Calu3 (cell line): ENCODE measurements at regions of chr17 and their contacts with region 1.

Region 1: DNA sequence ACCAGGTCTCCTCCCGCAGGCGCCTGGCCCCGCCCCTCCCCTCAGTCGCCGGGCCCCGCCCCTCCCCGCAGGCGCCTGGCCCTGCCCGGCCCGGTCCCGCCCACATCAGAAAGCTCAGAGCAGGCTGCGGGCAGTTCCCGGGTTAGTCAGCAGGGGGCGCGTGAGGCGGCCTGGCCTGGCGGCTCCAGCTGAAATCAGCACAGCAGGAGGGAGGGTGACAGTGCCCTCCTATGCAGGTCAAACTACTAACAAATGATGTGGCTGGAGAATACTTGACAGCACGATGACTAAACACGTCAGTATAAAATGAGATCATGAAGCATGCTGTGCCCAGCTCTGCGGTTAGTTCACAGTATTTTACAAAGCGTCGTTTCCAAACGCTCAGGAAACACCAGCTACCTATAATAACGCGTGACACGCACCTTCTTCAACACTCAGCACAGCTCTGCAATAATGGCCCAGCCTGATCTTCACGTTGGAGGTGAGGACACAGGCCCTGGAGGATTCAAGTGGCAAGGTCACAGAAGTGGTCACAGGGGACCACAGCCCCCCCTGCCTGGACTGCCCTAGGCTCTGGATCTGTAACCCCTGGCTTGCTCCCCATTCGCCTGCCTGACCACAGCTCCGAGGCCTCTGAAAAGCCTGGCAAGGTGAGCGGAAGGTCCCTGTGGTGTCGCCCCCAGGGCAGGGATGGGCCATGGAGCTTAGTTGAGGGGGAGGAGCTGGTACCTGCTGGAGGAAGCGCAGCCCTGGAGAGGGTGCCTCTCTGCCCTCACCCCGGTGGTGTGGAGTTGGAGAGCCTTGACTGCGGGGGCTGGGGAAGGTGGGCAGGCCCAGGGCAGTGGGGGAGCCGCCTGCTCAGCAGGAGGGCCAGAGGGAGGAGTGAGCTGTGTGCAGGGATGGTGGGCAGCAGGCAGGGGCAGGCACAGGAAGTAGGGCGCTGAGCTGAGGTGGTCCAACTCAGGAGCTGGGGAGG is 81.2 kb downstream of the KCNJ12 start:
- DNase-seq: peak; percentile 94
- H3K4me3 Mint-ChIP-seq: no peak overlapping the region
- H3K27ac Mint-ChIP-seq: peak overlapping the region; percentile 47
- H3K4me1 Mint-ChIP-seq: no peaks in the 10 kb centered on the region
- H3K27me3 Mint-ChIP-seq: peaks cover 50% of the 10 kb centered on the region
- CTCF ChIP-seq: peak; percentile 84

Region 2: GRCh38 chr17:21400816-21401593 is 56.3 kb before region 1 on chr17:
- CTCF ChIA-PET with region 1: no interaction called
- intact Hi-C with region 1: no loop called
- DNase-seq: no peak
- H3K4me3 Mint-ChIP-seq: no peak overlapping the region
- H3K27ac Mint-ChIP-seq: no peak overlapping the region
- H3K4me1 Mint-ChIP-seq: no peaks in the 10 kb centered on the region
- H3K27me3 Mint-ChIP-seq: peaks cover 13% of the 10 kb centered on the region
- CTCF ChIP-seq: no peak

Region 3: GRCh38 chr17:21500064-21500463 is 42.7 kb after region 1 on chr17:
- CTCF ChIA-PET with region 1: no interaction called
- intact Hi-C with region 1: no loop called
- DNase-seq: no peak
- H3K4me3 Mint-ChIP-seq: no peak overlapping the region
- H3K27ac Mint-ChIP-seq: no peak overlapping the region
- H3K4me1 Mint-ChIP-seq: no peaks in the 10 kb centered on the region
- H3K27me3 Mint-ChIP-seq: no peaks in the 10 kb centered on the region
- CTCF ChIP-seq: no peak

Region 4: GRCh38 chr17:21511363-21512198 is 54.2 kb after region 1 on chr17:
- CTCF ChIA-PET with region 1: interaction called, 16 read pairs
- intact Hi-C with region 1: loop called (anchors 10 kb)
- DNase-seq: peak; percentile 74
- H3K4me3 Mint-ChIP-seq: peak overlapping the region; percentile 64
- H3K27ac Mint-ChIP-seq: no peak overlapping the region
- H3K4me1 Mint-ChIP-seq: peaks cover 8% of the 10 kb centered on the region
- H3K27me3 Mint-ChIP-seq: peaks cover 75% of the 10 kb centered on the region
- CTCF ChIP-seq: peak; percentile 48